ENCODE measurements at regions of chr1 and their contacts with region 1.

Region 1: DNA sequence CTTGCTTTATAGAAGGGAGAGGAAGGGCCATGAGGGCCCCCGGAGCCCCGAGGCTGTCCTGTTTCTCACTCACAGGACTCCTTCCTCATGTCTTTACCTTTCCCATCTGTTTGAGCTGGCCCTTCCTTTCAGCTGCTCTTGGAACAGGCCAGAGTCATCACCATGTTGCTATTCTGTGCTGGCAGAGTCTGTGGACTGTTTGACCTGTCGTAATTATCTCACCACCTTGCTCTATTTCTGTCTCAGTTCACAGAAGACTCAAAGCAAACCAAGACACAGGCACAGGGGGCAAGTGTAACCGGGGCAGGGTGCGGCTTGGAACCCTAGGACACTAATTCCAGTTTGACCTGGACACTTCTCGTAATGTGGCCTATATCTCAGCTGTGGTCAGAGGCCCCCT is 104.3 kb upstream of the CD34 start:
- DNase-seq: no peak
- H3K4me3 ChIP-seq: no peak overlapping the region
- H3K27ac ChIP-seq: no peak overlapping the region
- H3K4me1 ChIP-seq: no peaks in the 10 kb centered on the region
- H3K27me3 ChIP-seq: peaks cover 0 to 8% (median 0%) of the 10 kb centered on the region in 7 donors
- CTCF ChIP-seq: no peak
- POLR2A ChIP-seq: no peak

Region 2: DNA sequence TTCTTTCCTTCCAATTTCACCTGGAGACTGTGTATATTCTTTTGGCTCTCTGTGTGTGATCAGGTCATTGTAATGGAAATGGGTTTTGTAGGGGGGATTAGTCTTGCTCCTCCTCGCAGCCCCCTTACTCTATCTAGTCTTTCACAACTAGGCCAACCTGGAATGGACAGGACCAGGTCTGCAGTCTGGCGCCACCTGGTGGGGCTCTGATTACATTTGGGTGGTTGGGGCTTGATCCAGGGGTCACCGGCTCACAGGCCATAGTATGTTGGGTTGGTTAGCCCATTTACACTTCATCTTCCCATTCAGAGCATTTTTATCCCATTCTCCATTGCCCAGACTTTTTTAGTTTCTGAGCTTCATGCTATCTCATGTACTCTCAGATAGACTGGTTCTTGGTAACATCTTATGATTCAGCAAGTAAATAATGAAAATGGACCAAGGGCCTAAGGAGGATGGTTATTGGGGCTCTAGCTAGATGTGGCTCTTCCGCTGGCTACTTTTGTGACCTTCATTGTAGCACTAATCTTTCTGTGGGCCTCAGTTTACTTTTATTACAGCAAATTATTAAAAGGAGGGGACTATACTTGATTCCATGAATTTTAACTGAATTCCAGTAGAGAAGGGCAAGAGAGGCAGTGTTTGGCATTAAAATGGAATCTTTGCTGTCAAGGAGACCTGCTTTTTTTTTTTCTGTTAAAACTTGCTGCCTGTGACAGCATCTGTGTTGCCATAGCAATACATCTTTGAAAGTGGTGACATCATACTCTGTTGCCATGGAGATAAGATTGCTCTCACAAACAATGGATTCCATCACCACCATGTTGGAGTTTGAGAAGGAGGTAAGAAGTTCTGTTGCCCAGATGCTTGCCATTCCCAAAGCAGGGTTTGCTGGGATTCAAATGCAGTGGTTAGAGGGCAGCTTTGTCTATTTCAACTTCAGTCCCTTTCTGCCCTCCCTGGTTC is 78.8 kb after region 1 on chr1:
- intact Hi-C with region 1: loop called (anchors 5 kb)
- DNase-seq: peak; percentile 83
- H3K4me3 ChIP-seq: no peak overlapping the region
- H3K27ac ChIP-seq: no peak overlapping the region
- H3K4me1 ChIP-seq: no peaks in the 10 kb centered on the region
- H3K27me3 ChIP-seq: no peaks in the 10 kb centered on the region
- CTCF ChIP-seq: peak; percentile 25 to 79 (median 65)
- POLR2A ChIP-seq: no peak